ENCODE measurements at regions of chr2 and their contacts with region 1.

Region 1: GRCh38 chr2:55014962-55015939 is 35.0 kb downstream of the RTN4 start:
- DNase-seq: peak in 1 of 2 donors; percentile 71
- H3K4me3 ChIP-seq: no peak overlapping the region
- H3K27ac ChIP-seq: no peak overlapping the region
- H3K4me1 ChIP-seq: peaks cover 2 to 41% of the 10 kb centered on the region in 2 donors
- H3K27me3 ChIP-seq: no peaks in the 10 kb centered on the region
- CTCF ChIP-seq: peak; percentile 42 to 78 (median 49)

Region 2: GRCh38 chr2:55168221-55169154 is 153.2 kb after region 1 on chr2:
- intact Hi-C with region 1: loop called (anchors 1 kb)
- DNase-seq: peak in 1 of 2 donors; percentile 83
- H3K4me3 ChIP-seq: no peak overlapping the region
- H3K27ac ChIP-seq: peak overlapping the region; percentile 73
- H3K4me1 ChIP-seq: peaks cover 0 to 36% of the 10 kb centered on the region in 2 donors
- H3K27me3 ChIP-seq: no peaks in the 10 kb centered on the region
- CTCF ChIP-seq: peak; percentile 63 to 73 (median 71)

Region 3: GRCh38 chr2:55885129-55885943 is 870.1 kb after region 1 on chr2:
- intact Hi-C with region 1: no loop called
- DNase-seq: peak in 1 of 2 donors; percentile 73
- H3K4me3 ChIP-seq: no peak overlapping the region
- H3K27ac ChIP-seq: peak overlapping the region; percentile 89 to 93
- H3K4me1 ChIP-seq: peaks cover 15 to 65% of the 10 kb centered on the region in 2 donors
- H3K27me3 ChIP-seq: no peaks in the 10 kb centered on the region
- CTCF ChIP-seq: no peak